ENCODE measurements at regions of chr14 and their contacts with region 1.

Region 1: GRCh38 chr14:22570132-22570949 is 18.7 kb downstream of the DAD1 start:
- DNase-seq: peak; percentile 89
- ATAC-seq: peak; percentile 80
- H3K4me3 Mint-ChIP-seq: peak overlapping the region; percentile 90
- H3K27ac Mint-ChIP-seq: peak overlapping the region; percentile 100
- H3K4me1 Mint-ChIP-seq: peaks cover 79% of the 10 kb centered on the region
- H3K27me3 Mint-ChIP-seq: no peaks in the 10 kb centered on the region

Region 2: GRCh38 chr14:21978184-21978998 is 592.0 kb before region 1 on chr14:
- CTCF ChIA-PET with region 1: interaction called, 20 read pairs
- POLR2A ChIA-PET with region 1: no interaction called
- intact Hi-C with region 1: no loop called
- DNase-seq: peak; percentile 78
- ATAC-seq: peak; percentile 79
- H3K4me3 Mint-ChIP-seq: peak overlapping the region; percentile 70
- H3K27ac Mint-ChIP-seq: peak overlapping the region; percentile 78
- H3K4me1 Mint-ChIP-seq: peaks cover 15% of the 10 kb centered on the region
- H3K27me3 Mint-ChIP-seq: no peaks in the 10 kb centered on the region

Region 3: DNA sequence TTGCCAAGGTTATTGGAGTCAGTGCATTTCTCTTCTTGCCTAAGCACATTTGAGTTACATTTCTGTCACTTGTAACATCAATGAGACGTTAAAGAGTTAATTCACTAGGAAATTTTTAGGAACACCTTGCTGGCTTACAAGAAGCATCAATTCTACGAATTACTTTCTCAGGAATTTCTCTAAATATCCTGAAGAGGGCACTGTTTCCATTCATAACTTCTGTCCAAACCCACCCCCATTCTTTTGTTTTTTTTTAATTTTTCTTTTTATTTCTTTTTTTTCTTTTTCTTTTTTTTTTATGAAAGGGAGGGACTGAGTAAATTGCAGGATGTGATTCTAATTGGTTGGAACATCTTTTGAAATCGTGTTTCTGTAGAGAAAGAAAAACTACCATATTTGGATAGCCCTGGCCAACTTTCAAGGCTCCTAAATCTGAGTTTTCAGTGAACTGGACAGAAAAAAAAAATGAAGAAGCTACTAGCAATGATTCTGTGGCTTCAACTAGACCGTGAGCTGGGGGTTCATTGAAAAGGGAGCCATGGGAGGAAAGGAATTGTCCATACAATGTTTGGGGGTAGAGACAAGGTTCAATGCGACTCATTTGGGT is 266.6 kb before region 1 on chr14:
- CTCF ChIA-PET with region 1: no interaction called
- POLR2A ChIA-PET with region 1: no interaction called
- intact Hi-C with region 1: loop called in 1 of 2 experiments (anchors 5 kb)
- DNase-seq: no peak
- ATAC-seq: no peak
- H3K4me3 Mint-ChIP-seq: peak overlapping the region; percentile 67
- H3K27ac Mint-ChIP-seq: no peak overlapping the region
- H3K4me1 Mint-ChIP-seq: no peaks in the 10 kb centered on the region
- H3K27me3 Mint-ChIP-seq: no peaks in the 10 kb centered on the region

Region 4: DNA sequence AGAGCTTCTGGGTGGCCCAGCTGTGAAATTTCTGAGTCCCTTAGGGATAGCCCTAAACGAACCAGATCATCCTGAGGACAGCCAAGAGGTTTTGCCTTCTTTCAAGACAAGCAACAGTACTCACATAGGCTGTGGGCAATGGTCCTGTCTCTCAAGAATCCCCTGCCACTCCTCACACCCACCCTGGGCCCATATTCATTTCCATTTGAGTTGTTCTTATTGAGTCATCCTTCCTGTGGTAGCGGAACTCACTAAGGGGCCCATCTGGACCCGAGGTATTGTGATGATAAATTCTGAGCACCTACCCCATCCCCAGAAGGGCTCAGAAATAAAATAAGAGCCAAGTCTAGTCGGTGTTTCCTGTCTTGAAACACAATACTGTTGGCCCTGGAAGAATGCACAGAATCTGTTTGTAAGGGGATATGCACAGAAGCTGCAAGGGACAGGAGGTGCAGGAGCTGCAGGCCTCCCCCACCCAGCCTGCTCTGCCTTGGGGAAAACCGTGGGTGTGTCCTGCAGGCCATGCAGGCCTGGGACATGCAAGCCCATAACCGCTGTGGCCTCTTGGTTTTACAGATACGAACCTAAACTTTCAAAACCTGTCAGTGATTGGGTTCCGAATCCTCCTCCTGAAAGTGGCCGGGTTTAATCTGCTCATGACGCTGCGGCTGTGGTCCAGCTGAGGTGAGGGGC is 20.2 kb before region 1 on chr14:
- CTCF ChIA-PET with region 1: interaction called, 195 read pairs
- POLR2A ChIA-PET with region 1: interaction called, 34 read pairs
- intact Hi-C with region 1: no loop called
- DNase-seq: peak; percentile 84
- ATAC-seq: peak; percentile 63
- H3K4me3 Mint-ChIP-seq: peak overlapping the region; percentile 71
- H3K27ac Mint-ChIP-seq: peak overlapping the region; percentile 99
- H3K4me1 Mint-ChIP-seq: peaks cover 94% of the 10 kb centered on the region
- H3K27me3 Mint-ChIP-seq: no peaks in the 10 kb centered on the region

Region 5: GRCh38 chr14:22713631-22713950 is 143.2 kb after region 1 on chr14:
- CTCF ChIA-PET with region 1: interaction called, 3 read pairs
- POLR2A ChIA-PET with region 1: no interaction called
- intact Hi-C with region 1: loop called (anchors 1 to 5 kb)
- DNase-seq: no peak
- ATAC-seq: no peak
- H3K4me3 Mint-ChIP-seq: peak overlapping the region; percentile 77
- H3K27ac Mint-ChIP-seq: peak overlapping the region; percentile 86
- H3K4me1 Mint-ChIP-seq: peaks cover 8% of the 10 kb centered on the region
- H3K27me3 Mint-ChIP-seq: peaks cover 14% of the 10 kb centered on the region

Region 6: GRCh38 chr14:22852940-22853767 is 282.8 kb after region 1 on chr14:
- CTCF ChIA-PET with region 1: interaction called, 87 read pairs
- POLR2A ChIA-PET with region 1: interaction called, 3 read pairs
- intact Hi-C with region 1: loop called (anchors 1 kb)
- DNase-seq: peak; percentile 94
- ATAC-seq: peak; percentile 82
- H3K4me3 Mint-ChIP-seq: peak overlapping the region; percentile 69
- H3K27ac Mint-ChIP-seq: peak overlapping the region; percentile 81
- H3K4me1 Mint-ChIP-seq: peaks cover 26% of the 10 kb centered on the region
- H3K27me3 Mint-ChIP-seq: peaks cover 7% of the 10 kb centered on the region